ENCODE measurements at regions of chr6 and their contacts with region 1.

Region 1: DNA sequence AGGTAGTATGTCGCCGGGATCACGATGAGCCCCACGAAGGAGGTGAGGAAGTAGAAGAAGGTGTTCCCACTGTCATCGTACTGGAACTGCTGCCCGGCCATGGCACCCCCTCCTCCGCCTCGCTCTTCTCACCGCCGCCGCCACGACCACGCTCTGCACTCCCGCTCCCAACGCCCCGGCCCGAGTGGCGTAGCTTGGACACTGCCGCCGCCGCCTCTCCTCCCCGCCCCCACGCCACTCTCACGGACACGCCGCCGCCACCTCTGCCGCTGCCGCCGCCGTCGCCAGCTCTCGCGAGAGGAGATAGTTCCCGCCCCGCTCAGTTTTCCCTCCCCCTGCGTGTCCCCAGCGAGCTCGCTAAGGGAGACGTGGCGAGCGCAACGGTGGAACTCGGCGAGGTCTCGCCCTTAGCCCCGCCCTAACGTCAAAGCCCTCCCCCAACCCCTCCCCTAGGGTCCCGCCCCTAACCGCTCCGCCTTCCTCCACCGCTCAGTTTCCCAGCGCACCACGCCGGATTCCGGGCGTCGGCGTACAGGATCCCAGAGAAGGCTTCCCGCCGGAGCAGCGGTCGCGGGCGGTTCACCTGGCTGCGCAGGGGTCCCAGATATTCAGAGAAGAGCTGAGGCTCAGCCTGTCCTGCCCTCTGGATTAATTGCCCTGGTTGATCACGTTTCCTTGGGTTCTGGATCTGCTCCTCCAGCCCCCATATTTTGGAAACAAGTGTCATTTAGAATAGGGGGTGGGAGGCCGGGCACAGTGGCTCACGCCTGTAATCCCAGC is at the start of gene SEC63:
- DNase-seq: peak; percentile 98
- ATAC-seq: peak; percentile 98
- H3K4me3 Mint-ChIP-seq: peak within 1 kb of the TSS; percentile 100
- H3K27ac Mint-ChIP-seq: peak within 1 kb of the TSS; percentile 99
- H3K4me1 Mint-ChIP-seq: peaks cover 36% of the 10 kb centered on the region
- H3K27me3 Mint-ChIP-seq: peaks cover 2% of the 10 kb centered on the region
- total RNA-seq, gene SEC63: 98.7 to 100 TPM

Region 2: DNA sequence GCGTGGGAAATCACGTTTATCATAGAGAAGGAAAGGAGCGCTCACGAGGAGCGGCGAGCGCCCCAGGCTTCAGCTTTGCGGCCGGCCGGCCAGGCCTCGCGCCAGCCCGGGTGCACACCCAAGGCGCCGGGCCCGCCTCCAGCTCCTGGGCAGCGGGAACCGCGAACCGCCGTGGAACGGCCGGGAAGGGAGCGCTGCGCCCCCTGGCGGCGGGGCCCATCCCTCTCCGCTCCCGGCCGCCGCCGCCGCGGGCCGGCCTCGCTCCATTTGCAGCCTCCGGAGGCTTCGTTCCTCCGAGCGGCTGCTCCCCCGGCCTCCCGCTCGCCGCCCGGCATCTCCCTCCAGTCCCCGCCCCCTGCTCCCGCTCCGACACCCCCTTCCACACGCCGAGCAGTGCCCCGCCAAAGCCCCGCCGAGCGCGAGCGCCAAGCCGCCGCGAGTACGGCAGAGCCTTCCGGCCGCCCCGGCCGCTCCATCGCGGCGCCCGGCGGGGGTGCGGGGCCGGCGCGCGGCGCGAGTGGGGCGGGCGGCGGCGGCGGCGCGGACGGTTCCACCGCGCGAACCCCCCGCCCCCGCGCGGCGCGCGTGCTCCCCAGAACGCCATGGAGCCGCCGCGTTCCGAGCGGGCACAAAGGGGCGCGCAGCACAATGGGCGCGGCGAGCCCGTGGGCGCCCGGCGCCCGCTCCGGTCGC is 843.7 kb before region 1 on chr6:
- CTCF ChIA-PET with region 1: no interaction called
- POLR2A ChIA-PET with region 1: no interaction called
- intact Hi-C with region 1: loop called in 1 of 2 experiments (anchors 10 kb)
- DNase-seq: peak; percentile 84
- ATAC-seq: peak; percentile 62
- H3K4me3 Mint-ChIP-seq: peak overlapping the region; percentile 67
- H3K27ac Mint-ChIP-seq: peak overlapping the region; percentile 65
- H3K4me1 Mint-ChIP-seq: peaks cover 21% of the 10 kb centered on the region
- H3K27me3 Mint-ChIP-seq: peaks cover 5% of the 10 kb centered on the region

Region 3: DNA sequence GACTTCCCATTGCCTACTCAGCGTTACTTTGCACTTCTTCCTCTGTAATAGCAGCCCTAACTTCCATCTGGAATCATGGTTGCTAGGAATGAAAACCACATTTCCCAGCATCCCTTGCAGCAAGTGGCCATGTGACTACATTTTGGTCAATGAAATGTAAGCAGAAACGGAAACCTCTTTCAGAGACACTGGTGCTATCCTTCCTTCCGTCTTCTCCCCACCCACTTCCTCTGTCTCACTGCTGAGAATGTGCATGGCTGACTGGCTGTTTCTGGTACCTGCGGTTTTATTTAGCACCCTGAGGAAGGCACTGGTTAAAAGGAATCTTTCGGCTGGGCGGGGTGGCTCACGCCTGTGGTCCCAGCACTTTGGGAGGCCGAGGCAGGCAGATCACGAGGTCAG is 241.4 kb before region 1 on chr6:
- CTCF ChIA-PET with region 1: no interaction called
- POLR2A ChIA-PET with region 1: interaction called, 3 read pairs
- intact Hi-C with region 1: loop called (anchors 2 to 10 kb)
- DNase-seq: peak; percentile 84
- ATAC-seq: peak; percentile 62
- H3K4me3 Mint-ChIP-seq: peak overlapping the region; percentile 53
- H3K27ac Mint-ChIP-seq: peak overlapping the region; percentile 90
- H3K4me1 Mint-ChIP-seq: peaks cover 72% of the 10 kb centered on the region
- H3K27me3 Mint-ChIP-seq: no peaks in the 10 kb centered on the region

Region 4: DNA sequence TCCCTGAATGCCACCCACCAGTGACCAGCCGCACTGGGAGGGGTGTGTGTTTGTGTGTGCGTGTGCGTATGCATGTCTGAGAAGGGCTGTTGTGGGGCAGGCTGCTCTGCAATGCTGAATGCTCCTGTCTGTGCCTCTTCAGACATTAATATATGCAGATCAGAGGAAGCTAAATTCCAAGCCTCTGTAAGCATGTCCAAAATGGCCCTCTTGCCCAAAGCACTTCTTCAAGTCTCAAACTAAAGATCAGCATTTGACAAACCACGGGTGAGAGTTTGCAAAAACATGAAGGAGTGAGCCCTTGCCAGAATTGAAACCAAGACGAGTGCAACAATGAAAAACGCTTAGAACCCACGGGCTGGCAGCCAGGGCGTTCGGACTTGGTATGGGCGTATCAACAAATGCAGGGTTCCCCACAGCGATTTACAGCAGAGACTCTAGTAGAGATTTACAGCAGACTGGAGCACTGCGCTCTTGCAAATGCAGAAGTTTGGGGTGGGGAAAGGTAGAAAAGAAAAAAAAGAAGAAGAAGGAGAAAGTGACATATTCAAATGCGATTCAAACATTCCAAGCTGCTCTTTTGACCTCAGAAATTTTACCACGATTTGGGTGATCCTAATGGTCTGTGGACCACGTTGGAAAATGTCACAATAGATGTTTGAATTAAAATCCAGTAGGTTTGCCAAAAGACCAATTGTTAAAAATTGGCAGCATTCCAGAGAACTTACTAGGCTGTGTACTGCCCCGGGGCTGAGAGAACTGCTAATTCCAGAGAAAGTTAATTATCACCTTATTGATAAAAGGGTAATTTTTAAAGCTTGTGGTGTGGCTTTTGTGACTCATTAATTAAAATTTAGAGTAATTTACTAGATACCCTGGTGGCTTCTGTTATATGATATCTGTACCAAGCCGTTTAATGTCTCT is 137.5 kb before region 1 on chr6:
- CTCF ChIA-PET with region 1: interaction called, 3 read pairs
- POLR2A ChIA-PET with region 1: no interaction called
- intact Hi-C with region 1: loop called in 1 of 2 experiments (anchors 1 kb)
- DNase-seq: peak; percentile 60
- ATAC-seq: no peak
- H3K4me3 Mint-ChIP-seq: peak overlapping the region; percentile 87
- H3K27ac Mint-ChIP-seq: peak overlapping the region; percentile 98
- H3K4me1 Mint-ChIP-seq: peaks cover 84% of the 10 kb centered on the region
- H3K27me3 Mint-ChIP-seq: no peaks in the 10 kb centered on the region

Region 5: GRCh38 chr6:108074359-108075144 is 116.5 kb after region 1 on chr6 and contains the start of gene OSTM1:
- CTCF ChIA-PET with region 1: no interaction called
- POLR2A ChIA-PET with region 1: no interaction called
- intact Hi-C with region 1: loop called (anchors 1 to 10 kb)
- DNase-seq: peak; percentile 96
- ATAC-seq: peak; percentile 98
- H3K4me3 Mint-ChIP-seq: peak within 1 kb of the TSS; percentile 76
- H3K27ac Mint-ChIP-seq: peak within 1 kb of the TSS; percentile 80
- H3K4me1 Mint-ChIP-seq: peaks cover 19% of the 10 kb centered on the region
- H3K27me3 Mint-ChIP-seq: peaks cover 3% of the 10 kb centered on the region
- total RNA-seq, gene OSTM1: 5.5 to 7.3 TPM

Region 6: GRCh38 chr6:108294727-108295625 is 336.9 kb after region 1 on chr6 and contains the start of gene AFG1L:
- CTCF ChIA-PET with region 1: no interaction called
- POLR2A ChIA-PET with region 1: no interaction called
- intact Hi-C with region 1: loop called (anchors 2 to 10 kb)
- DNase-seq: peak; percentile 93
- ATAC-seq: peak; percentile 92
- H3K4me3 Mint-ChIP-seq: peak within 1 kb of the TSS; percentile 99
- H3K27ac Mint-ChIP-seq: peak within 1 kb of the TSS; percentile 100
- H3K4me1 Mint-ChIP-seq: peaks cover 13% of the 10 kb centered on the region
- H3K27me3 Mint-ChIP-seq: no peaks in the 10 kb centered on the region
- total RNA-seq, gene AFG1L: 6.6 TPM

Region 7: GRCh38 chr6:108598305-108598863 is 640.3 kb after region 1 on chr6:
- CTCF ChIA-PET with region 1: no interaction called
- POLR2A ChIA-PET with region 1: no interaction called
- intact Hi-C with region 1: no loop called
- DNase-seq: peak; percentile 33
- ATAC-seq: peak; percentile 95
- H3K4me3 Mint-ChIP-seq: no peak overlapping the region
- H3K27ac Mint-ChIP-seq: no peak overlapping the region
- H3K4me1 Mint-ChIP-seq: peaks cover 21% of the 10 kb centered on the region
- H3K27me3 Mint-ChIP-seq: no peaks in the 10 kb centered on the region

Region 8: GRCh38 chr6:109482905-109483735 is 1525.0 kb after region 1 on chr6 and contains the start of gene ZBTB24:
- CTCF ChIA-PET with region 1: no interaction called
- POLR2A ChIA-PET with region 1: no interaction called
- intact Hi-C with region 1: loop called in 1 of 2 experiments (anchors 2 kb)
- DNase-seq: peak; percentile 94
- ATAC-seq: peak; percentile 84
- H3K4me3 Mint-ChIP-seq: peak within 1 kb of the TSS; percentile 96
- H3K27ac Mint-ChIP-seq: peak within 1 kb of the TSS; percentile 94
- H3K4me1 Mint-ChIP-seq: peaks cover 43% of the 10 kb centered on the region
- H3K27me3 Mint-ChIP-seq: no peaks in the 10 kb centered on the region
- total RNA-seq, gene ZBTB24: 12.0 to 14.7 TPM